ENCODE measurements at regions of chr6 and their contacts with region 1.

Region 1: GRCh38 chr6:14035448-14035847 is 82.1 kb upstream of the CD83 start:
- DNase-seq: peak in 1 of 2 donors; percentile 45
- H3K4me3 ChIP-seq: no peak overlapping the region
- H3K27ac ChIP-seq: no peak overlapping the region
- H3K4me1 ChIP-seq: no peaks in the 10 kb centered on the region
- H3K27me3 ChIP-seq: no peaks in the 10 kb centered on the region
- CTCF ChIP-seq: no peak
- POLR2A ChIP-seq: no peak

Region 2: GRCh38 chr6:13586603-13587542 is 448.6 kb before region 1 on chr6:
- intact Hi-C with region 1: no loop called
- DNase-seq: no peak
- H3K4me3 ChIP-seq: no peak overlapping the region
- H3K27ac ChIP-seq: no peak overlapping the region
- H3K4me1 ChIP-seq: no peaks in the 10 kb centered on the region
- H3K27me3 ChIP-seq: no peaks in the 10 kb centered on the region
- CTCF ChIP-seq: no peak
- POLR2A ChIP-seq: no peak

Region 3: DNA sequence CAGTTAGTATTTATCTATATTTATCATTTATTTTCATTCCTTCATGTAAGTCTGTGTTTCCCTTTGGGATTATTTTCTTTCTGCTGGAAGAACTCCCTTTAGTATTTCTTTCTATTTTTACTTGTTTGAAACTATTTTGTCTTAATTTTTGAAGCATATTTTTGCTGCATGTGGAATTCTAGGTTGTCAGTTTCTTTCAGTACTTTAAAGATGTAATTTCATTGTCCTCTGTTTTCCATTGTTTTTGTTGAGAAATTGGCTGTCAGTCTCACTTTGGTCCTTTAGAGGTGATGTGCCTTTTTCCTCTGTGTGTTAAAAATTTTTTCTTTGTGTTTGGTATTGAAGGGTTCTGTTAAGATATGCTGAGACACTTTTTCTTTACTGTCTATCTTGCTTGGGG is 93.5 kb before region 1 on chr6:
- intact Hi-C with region 1: no loop called
- DNase-seq: no peak
- H3K4me3 ChIP-seq: no peak overlapping the region
- H3K27ac ChIP-seq: no peak overlapping the region
- H3K4me1 ChIP-seq: no peaks in the 10 kb centered on the region
- H3K27me3 ChIP-seq: no peaks in the 10 kb centered on the region
- CTCF ChIP-seq: no peak
- POLR2A ChIP-seq: no peak

Region 4: GRCh38 chr6:14017626-14018475 is 17.6 kb before region 1 on chr6:
- intact Hi-C with region 1: loop called (anchors 1 kb)
- DNase-seq: no peak
- H3K4me3 ChIP-seq: no peak overlapping the region
- H3K27ac ChIP-seq: peak overlapping the region in 1 of 2 donors; percentile 49
- H3K4me1 ChIP-seq: no peaks in the 10 kb centered on the region
- H3K27me3 ChIP-seq: no peaks in the 10 kb centered on the region
- CTCF ChIP-seq: no peak
- POLR2A ChIP-seq: no peak

Region 5: DNA sequence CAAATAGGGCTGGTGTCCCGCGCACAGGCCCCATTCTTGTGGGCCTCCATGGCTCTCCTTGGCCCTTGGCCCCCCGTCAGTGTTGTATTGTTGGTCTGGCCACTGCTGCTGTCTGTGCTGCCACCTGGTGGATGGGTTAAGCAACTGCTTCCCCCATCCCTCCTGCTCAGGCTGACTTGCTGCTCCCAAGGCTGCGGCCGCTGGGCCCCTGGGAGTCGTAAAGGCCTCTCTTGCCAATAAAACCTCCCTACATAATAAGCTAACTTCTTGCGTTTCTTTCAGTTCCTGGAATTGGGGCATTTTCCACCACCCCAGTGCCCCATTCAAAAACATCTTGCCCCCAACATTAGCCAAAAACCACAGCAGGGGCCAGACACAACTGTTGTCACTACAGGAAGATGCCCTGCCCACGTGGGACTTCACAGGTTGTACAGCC is 109.2 kb after region 1 on chr6:
- intact Hi-C with region 1: no loop called
- DNase-seq: peak in 1 of 2 donors; percentile 57
- H3K4me3 ChIP-seq: no peak overlapping the region
- H3K27ac ChIP-seq: no peak overlapping the region
- H3K4me1 ChIP-seq: no peaks in the 10 kb centered on the region
- H3K27me3 ChIP-seq: no peaks in the 10 kb centered on the region
- CTCF ChIP-seq: peak; percentile 63 to 79 (median 69)
- POLR2A ChIP-seq: no peak